Activated T-helper 1 cell treated with anti-CD3 and anti-CD28 coated beads, Interleukin-12 subunit alpha, Interleukin-12 subunit beta, Interleukin-2, Interleukin-4 antibody, amounts not matched to agents 30 ng/mL and 10 ng/mL and 1 ng/mL, durations not matched to agents 14 hours and 24 hours and 36 hours (primary cell): ENCODE measurements at regions of chr19 and their contacts with region 1.

Region 1: DNA sequence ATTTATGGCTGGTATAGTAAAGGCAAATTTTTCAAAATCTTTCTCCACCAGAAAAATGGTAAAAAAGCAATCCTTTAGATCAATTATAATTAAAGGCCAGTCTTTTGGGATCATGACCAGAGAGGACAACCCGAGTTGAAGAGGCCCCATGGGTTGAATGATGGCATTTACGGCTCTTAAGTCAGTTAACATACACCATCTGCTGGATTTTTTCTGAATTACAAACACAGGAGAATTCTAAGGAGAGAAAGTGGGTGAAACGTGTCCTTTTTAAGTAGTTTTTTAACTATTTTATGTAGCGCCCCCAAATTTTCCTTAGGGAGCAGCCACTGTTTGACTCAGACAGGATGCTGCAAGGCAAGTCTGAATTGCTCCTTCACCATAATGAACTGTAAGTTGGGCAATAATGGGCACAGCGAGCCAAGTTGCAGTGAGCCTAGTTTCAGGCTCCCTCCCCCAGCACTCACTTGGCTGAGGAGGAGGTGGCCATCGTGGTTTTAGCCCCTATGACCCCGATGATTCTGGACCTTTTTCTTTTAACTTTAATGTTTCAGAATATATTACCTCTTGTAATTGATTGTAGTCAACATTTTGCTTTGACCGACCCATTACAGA is 13.6 kb upstream of the ZNF611 start:
- DNase-seq: no peak
- H3K4me3 Mint-ChIP-seq: no peak overlapping the region
- H3K27ac Mint-ChIP-seq: no peak overlapping the region
- H3K4me1 Mint-ChIP-seq: no peaks in the 10 kb centered on the region
- H3K27me3 Mint-ChIP-seq: no peaks in the 10 kb centered on the region

Region 2: GRCh38 chr19:52248241-52248640 is 500.2 kb before region 1 on chr19:
- intact Hi-C with region 1: loop called (anchors 1 kb)
- DNase-seq: peak; percentile 12
- H3K4me3 Mint-ChIP-seq: no peak overlapping the region
- H3K27ac Mint-ChIP-seq: no peak overlapping the region
- H3K4me1 Mint-ChIP-seq: no peaks in the 10 kb centered on the region
- H3K27me3 Mint-ChIP-seq: no peaks in the 10 kb centered on the region

Region 3: GRCh38 chr19:52786457-52787359 is 38.3 kb after region 1 on chr19 and contains the start of gene ZNF600:
- intact Hi-C with region 1: no loop called
- DNase-seq: peak; percentile 52
- H3K4me3 Mint-ChIP-seq: peak within 1 kb of the TSS; percentile 90
- H3K27ac Mint-ChIP-seq: peak within 1 kb of the TSS; percentile 75
- H3K4me1 Mint-ChIP-seq: peaks cover 26% of the 10 kb centered on the region
- H3K27me3 Mint-ChIP-seq: no peaks in the 10 kb centered on the region
- total RNA-seq, gene ZNF600: 11.9 and 13.4 TPM in 2 replicates